Posterior cingulate gyrus (tissue), 11 donors: ENCODE measurements at regions of chr19 and their contacts with region 1.

Region 1: DNA sequence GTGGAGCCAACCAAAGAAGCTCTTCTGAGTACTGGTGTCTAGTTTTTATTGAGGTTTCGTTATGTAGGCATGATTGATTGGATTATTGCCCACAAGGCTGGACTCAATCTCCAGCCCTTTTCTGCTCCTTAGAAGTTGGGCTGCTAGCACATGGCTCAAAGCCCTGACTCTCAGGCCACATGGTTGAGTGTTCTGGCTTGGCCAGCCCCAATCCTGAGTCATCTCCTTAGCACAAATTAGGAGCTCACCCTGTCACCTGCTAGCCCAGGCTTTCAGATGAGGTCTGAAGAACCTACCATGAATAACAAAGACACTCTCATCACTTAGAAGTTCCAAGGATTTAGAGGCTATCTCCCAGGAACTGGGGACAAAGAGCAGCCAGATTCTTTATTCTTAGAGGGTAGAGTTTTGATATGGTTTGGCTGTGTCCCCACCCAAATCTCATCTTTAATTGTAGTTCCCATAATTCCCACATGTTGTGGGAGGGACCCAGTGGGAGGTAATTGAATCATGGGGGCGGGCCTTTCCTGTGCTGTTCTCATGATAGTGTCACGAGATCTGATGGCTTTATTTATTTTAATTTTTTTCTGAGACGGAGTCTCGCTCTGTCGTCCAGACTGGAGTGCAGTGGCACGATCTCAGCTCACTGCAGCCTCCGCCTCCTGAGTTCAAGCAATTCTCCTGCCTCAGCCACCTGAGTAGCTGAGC is 11.3 kb downstream of the DPY19L3 start:
- DNase-seq: peak in 1 of 10 donors; percentile 35

Region 2: GRCh38 chr19:32265995-32266394 is 150.9 kb before region 1 on chr19:
- intact Hi-C with region 1: no loop called
- DNase-seq: no peak

Region 3: DNA sequence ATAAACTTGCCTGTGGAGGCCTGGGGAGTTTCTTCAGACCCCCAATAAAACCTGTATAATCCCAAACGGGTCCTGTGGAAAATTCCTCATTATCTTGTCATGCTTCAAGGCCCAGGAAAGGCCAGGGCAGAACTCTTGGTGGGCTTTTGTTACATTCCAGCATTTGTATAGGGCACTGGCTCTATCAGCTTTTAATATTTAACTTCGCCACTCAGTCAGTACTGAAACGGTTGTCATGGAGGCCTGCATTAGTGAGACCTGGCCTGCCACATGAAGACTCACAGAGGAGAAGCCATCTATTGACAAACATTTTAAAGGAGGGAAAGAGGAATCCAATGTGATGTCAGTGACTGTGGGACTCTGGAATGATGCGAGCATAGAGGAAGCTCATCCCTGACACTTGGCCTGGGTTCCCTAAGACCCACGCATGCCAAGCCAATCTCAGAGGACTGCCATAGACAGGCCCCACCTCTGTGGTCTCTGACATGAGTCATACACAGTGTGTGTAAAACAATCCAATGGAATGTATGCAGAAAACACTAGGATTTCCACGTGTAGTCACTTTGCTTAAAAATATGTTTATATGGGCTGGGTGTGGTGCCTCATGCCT is 19.3 kb before region 1 on chr19:
- intact Hi-C with region 1: loop called (anchors 1 kb)
- DNase-seq: no peak